Transverse colon (tissue), 4 donors: ENCODE measurements at regions of chr11 and their contacts with region 1.

Region 1: DNA sequence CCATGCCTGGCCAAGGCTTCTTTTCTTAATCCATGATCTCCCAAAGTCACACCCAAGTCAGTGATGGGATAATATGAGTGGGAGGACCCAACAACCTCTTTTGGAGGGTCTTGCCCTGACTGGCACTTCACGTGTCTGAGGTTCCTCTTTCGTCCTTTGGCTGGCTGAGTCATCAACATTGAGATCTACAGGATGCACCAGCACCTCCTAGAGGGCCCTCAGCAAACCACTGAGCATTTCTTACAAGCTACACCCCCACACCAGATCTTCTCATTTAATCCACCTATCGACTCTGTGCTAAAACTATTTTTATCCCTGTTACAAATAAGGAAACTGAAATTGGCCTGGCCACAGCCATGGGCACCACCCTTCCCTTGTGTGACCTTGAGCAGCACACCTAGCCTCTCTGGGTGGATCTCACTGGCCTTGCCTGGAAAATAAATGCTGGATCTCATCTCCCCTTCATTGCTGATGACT is 63.4 kb downstream of the FLI1 start:
- DNase-seq: peak; percentile 69
- H3K4me3 ChIP-seq: no peak overlapping the region
- H3K27ac ChIP-seq: peak overlapping the region in 2 of 4 donors; percentile 16 to 26
- H3K4me1 ChIP-seq: no peaks in the 10 kb centered on the region
- H3K27me3 ChIP-seq: no peaks in the 10 kb centered on the region
- CTCF ChIP-seq: peak in 3 of 5 experiments; percentile 9 to 19 (median 16)
- EP300 ChIP-seq: no peak
- POLR2A ChIP-seq: no peak

Region 2: DNA sequence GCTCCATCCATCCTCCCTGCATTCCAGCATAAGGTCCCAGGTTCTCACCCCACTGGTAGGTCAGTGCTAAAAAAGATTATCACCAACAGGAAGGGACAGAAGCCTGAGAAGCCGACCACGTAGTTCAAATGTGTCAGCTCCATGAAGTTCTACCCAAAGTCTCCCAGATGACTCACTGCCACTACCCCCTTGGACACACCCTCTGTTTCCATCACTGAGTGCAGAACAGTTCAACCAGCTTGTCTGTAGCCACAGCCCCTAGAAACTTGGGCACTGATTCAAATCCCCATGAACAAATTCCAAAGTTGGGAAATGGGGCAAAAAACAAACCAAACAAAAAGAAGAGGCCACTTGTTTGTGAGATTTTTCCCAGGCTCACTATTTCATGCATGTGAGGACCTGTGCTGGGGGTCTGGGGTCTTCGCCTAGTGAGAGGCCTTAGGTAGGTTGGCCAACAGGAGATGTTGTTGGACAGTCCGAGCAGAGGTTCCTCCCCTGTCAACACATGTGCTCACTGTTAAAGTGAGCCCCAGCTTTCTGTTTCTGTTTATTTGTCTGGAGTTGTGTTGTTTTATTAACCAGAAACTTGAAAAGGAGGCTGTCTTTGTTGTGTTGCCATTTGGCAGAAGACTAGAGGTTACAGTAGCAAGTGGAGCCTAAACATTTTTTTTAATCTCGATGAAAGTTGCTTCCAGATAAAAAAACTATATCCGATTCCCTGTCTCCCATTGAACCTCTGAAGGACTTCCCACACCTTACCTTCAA is 87.6 kb before region 1 on chr11:
- in situ Hi-C with region 1: loop called in 1 of 4 experiments (anchors 10 kb)
- intact Hi-C with region 1: no loop called
- DNase-seq: no peak
- H3K4me3 ChIP-seq: no peak overlapping the region
- H3K27ac ChIP-seq: no peak overlapping the region
- H3K4me1 ChIP-seq: no peaks in the 10 kb centered on the region
- H3K27me3 ChIP-seq: peaks cover 6% of the 10 kb centered on the region
- CTCF ChIP-seq: no peak
- EP300 ChIP-seq: no peak
- POLR2A ChIP-seq: no peak

Region 3: GRCh38 chr11:128814856-128815705 is 57.8 kb after region 1 on chr11:
- in situ Hi-C with region 1: no loop called
- intact Hi-C with region 1: no loop called
- DNase-seq: peak; percentile 19
- H3K4me3 ChIP-seq: no peak overlapping the region
- H3K27ac ChIP-seq: no peak overlapping the region
- H3K4me1 ChIP-seq: no peaks in the 10 kb centered on the region
- H3K27me3 ChIP-seq: no peaks in the 10 kb centered on the region
- CTCF ChIP-seq: no peak
- EP300 ChIP-seq: no peak
- POLR2A ChIP-seq: no peak